ENCODE measurements at regions of chr17 and their contacts with region 1.

Region 1: DNA sequence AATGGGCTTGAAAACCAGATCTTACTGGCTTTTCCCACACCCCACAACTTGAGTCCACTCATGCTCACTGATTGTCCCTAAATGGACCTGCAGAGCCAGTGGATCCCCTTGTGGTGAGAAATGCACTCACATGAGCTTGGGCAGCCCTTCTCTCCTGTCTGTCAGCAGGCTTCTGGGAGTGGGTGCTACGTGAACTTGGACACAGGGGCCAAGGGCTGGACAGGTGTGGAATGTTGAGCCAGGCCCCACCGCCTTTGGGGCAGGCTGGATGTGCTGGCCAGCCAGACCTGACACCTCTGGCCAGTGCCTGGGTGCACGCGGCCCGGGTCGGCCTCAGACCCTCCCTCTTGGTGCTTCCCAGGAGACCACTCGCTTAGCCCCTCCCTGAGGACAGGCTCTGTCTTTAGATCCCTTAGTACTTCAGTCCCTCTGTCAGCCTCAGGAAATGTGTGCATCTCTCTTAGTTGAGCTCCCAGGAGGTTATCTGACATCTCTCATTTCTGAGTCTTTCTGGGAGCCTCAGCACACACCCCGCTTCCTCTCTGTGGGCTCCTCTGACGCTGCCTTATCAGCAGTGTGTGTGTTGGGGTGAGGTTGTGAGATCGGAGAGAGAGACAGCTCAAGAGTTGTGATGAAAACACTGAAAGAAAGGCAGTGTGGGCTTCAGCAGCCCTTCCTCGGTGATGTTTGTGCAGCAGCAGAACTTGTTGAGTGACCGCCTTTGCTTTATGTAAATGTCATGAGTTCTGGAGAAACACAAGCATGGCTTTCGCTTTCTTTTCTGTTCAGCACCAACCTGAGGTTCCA is 117.0 kb downstream of the RAB11FIP4 start:
- DNase-seq: peak; percentile 85
- H3K4me3 Mint-ChIP-seq: peak overlapping the region; percentile 78
- H3K27ac Mint-ChIP-seq: peak overlapping the region; percentile 100
- H3K4me1 Mint-ChIP-seq: peaks cover 52% of the 10 kb centered on the region
- H3K27me3 Mint-ChIP-seq: no peaks in the 10 kb centered on the region

Region 2: DNA sequence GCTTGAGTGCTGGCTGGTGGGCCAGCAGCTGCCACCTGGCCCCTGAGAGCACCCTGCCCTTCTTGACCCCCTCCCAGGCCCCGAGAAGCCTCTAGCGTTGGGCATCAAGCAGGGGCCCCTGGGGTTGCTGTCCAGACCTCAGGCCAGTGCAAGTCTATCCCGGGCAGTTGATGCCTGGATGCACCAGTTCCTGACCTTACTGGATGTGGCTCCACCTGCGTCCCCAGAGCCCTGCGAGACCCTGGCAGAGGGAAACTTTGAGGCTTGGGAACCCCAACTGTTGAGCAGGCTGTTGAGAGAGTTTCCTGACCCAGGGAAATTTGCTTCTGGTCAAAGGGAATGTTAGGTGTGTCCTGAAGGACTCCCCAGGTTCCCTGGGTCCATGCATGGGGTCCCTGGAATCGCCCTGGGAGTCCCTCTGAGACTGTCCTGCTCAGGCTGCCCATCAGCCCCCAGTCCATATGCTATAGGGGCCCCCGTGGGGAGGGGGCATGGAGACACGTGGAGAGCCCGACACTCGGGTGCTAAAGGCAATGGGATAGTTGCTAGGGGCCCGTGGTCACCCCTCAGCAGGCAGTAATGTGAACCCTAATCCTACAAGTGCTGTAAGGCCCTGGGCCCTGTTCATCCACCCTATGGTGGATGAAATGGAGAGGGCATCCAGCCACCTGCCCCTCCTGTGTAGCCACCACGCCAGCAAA is 70.6 kb before region 1 on chr17:
- CTCF ChIA-PET with region 1: interaction called, 41 read pairs
- DNase-seq: no peak
- H3K4me3 Mint-ChIP-seq: no peak overlapping the region
- H3K27ac Mint-ChIP-seq: no peak overlapping the region
- H3K4me1 Mint-ChIP-seq: peaks cover 17% of the 10 kb centered on the region
- H3K27me3 Mint-ChIP-seq: peaks cover 39% of the 10 kb centered on the region

Region 3: GRCh38 chr17:31487648-31488263 is 20.7 kb before region 1 on chr17:
- CTCF ChIA-PET with region 1: interaction called, 30 read pairs
- DNase-seq: peak; percentile 95
- H3K4me3 Mint-ChIP-seq: peak overlapping the region; percentile 79
- H3K27ac Mint-ChIP-seq: peak overlapping the region; percentile 90
- H3K4me1 Mint-ChIP-seq: peaks cover 51% of the 10 kb centered on the region
- H3K27me3 Mint-ChIP-seq: peaks cover 10% of the 10 kb centered on the region

Region 4: DNA sequence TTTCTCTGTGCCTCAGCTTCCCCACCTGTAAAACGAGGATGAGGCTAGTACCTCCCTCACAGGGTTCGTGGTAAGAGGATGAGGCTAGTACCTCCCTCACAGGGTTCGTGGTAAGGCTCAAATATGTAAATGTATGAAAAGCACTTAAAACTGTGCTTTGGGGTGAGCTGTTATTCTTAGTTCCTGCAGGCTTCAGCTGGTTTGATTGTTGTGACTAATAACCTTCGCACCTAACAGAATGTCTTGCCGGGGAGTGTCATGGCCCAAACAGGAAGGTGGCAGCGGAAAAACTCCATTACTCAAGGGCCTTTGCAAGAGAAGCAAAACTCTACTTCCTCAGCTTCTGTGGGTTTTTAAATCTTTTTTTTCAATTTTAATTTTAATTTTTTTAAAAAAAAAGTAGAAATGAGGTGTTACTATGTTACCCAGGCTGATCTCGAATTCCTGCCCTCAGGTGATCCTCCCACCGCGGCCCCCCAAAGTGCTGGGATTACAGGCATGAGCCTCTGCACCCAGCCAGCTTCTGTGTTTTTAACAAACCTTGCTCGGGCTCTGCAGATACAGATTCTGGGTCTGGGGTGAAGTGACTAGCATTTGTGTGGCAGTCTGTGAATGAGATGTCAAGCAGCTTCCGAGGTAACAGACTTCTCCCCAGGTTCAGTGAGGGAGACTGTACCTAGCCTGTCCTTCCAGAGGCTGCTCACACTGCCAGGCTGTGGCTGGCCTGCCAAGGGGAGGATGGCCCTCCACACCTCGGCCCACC is 14.1 kb before region 1 on chr17:
- CTCF ChIA-PET with region 1: interaction called, 30 read pairs
- DNase-seq: peak; percentile 77
- H3K4me3 Mint-ChIP-seq: peak overlapping the region; percentile 58
- H3K27ac Mint-ChIP-seq: peak overlapping the region; percentile 100
- H3K4me1 Mint-ChIP-seq: peaks cover 79% of the 10 kb centered on the region
- H3K27me3 Mint-ChIP-seq: no peaks in the 10 kb centered on the region

Region 5: GRCh38 chr17:31524926-31525800 is 16.7 kb after region 1 on chr17:
- CTCF ChIA-PET with region 1: interaction called, 30 read pairs
- DNase-seq: peak; percentile 90
- H3K4me3 Mint-ChIP-seq: no peak overlapping the region
- H3K27ac Mint-ChIP-seq: no peak overlapping the region
- H3K4me1 Mint-ChIP-seq: no peaks in the 10 kb centered on the region
- H3K27me3 Mint-ChIP-seq: no peaks in the 10 kb centered on the region